ENCODE measurements at regions of chr3 and their contacts with region 1.

Region 1: GRCh38 chr3:27467545-27467944 is 16.6 kb downstream of the SLC4A7 start:
- DNase-seq: no peak
- H3K4me3 Mint-ChIP-seq: no peak overlapping the region
- H3K27ac Mint-ChIP-seq: no peak overlapping the region
- H3K4me1 Mint-ChIP-seq: no peaks in the 10 kb centered on the region
- H3K27me3 Mint-ChIP-seq: no peaks in the 10 kb centered on the region
- CTCF ChIP-seq: no peak

Region 2: DNA sequence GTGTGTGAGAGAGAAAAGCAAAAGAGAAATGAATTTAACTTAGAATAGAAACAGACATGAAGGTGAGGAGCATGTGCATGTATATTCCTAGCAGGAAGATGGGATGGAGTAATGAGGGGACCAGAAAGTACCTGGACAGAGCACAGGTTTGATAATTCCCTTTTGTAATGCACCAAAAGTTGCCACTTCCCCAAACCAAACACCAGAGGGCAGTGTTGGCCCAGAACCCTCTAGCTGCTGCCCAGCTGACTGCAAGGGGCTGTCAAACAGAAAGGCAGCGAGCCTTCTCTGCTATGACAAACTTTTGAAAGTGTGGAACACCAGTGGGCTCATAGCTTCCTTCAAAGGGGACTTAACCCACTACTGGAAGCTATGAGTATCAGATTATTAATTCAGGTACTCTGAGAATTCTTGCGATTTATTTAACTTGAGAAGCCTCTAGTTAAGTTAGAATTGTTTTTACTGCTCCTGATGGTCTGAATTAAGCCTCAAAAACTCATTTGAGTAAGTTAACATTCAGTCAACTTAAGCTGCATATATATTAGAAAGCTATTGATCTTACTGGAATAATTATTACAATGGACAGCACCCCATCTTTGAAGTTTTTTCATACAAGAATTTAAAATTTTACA is 333.3 kb before region 1 on chr3:
- CTCF ChIA-PET with region 1: no interaction called
- intact Hi-C with region 1: loop called (anchors 5 kb)
- DNase-seq: peak; percentile 70
- H3K4me3 Mint-ChIP-seq: no peak overlapping the region
- H3K27ac Mint-ChIP-seq: no peak overlapping the region
- H3K4me1 Mint-ChIP-seq: peaks cover 19% of the 10 kb centered on the region
- H3K27me3 Mint-ChIP-seq: no peaks in the 10 kb centered on the region
- CTCF ChIP-seq: peak; percentile 79

Region 3: GRCh38 chr3:27312044-27312668 is 155.4 kb before region 1 on chr3:
- CTCF ChIA-PET with region 1: no interaction called
- intact Hi-C with region 1: loop called (anchors 1 kb)
- DNase-seq: peak; percentile 26
- H3K4me3 Mint-ChIP-seq: no peak overlapping the region
- H3K27ac Mint-ChIP-seq: no peak overlapping the region
- H3K4me1 Mint-ChIP-seq: no peaks in the 10 kb centered on the region
- H3K27me3 Mint-ChIP-seq: no peaks in the 10 kb centered on the region
- CTCF ChIP-seq: peak; percentile 50

Region 4: GRCh38 chr3:27345492-27345891 is 122.1 kb before region 1 on chr3:
- CTCF ChIA-PET with region 1: no interaction called
- intact Hi-C with region 1: no loop called
- DNase-seq: peak; percentile 69
- H3K4me3 Mint-ChIP-seq: peak overlapping the region; percentile 51
- H3K27ac Mint-ChIP-seq: peak overlapping the region; percentile 61
- H3K4me1 Mint-ChIP-seq: peaks cover 28% of the 10 kb centered on the region
- H3K27me3 Mint-ChIP-seq: no peaks in the 10 kb centered on the region
- CTCF ChIP-seq: no peak

Region 5: GRCh38 chr3:27357665-27358258 is 109.8 kb before region 1 on chr3:
- CTCF ChIA-PET with region 1: no interaction called
- intact Hi-C with region 1: loop called (anchors 5 kb)
- DNase-seq: peak; percentile 69
- H3K4me3 Mint-ChIP-seq: no peak overlapping the region
- H3K27ac Mint-ChIP-seq: no peak overlapping the region
- H3K4me1 Mint-ChIP-seq: peaks cover 24% of the 10 kb centered on the region
- H3K27me3 Mint-ChIP-seq: no peaks in the 10 kb centered on the region
- CTCF ChIP-seq: no peak

Region 6: DNA sequence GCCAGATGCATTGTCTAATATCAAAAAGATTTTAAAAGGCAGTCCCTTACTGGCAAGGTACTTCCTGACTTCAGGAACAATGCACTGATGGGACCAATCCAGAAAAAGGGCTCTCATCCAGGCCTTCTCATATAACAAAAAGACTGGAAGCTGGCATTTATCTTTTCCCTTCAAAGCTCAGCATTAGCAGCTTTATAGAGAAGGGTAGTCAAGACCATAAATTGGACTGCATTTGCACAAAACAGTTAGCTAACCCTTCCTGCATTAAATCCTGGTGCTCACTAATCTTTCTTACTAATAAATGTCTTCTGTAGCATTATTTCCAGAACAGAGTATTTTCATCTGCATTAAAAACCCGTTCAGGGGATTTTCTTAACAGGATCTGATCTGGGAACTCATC is 52.3 kb before region 1 on chr3:
- CTCF ChIA-PET with region 1: no interaction called
- intact Hi-C with region 1: loop called (anchors 10 kb)
- DNase-seq: no peak
- H3K4me3 Mint-ChIP-seq: no peak overlapping the region
- H3K27ac Mint-ChIP-seq: no peak overlapping the region
- H3K4me1 Mint-ChIP-seq: no peaks in the 10 kb centered on the region
- H3K27me3 Mint-ChIP-seq: no peaks in the 10 kb centered on the region
- CTCF ChIP-seq: no peak

Region 7: DNA sequence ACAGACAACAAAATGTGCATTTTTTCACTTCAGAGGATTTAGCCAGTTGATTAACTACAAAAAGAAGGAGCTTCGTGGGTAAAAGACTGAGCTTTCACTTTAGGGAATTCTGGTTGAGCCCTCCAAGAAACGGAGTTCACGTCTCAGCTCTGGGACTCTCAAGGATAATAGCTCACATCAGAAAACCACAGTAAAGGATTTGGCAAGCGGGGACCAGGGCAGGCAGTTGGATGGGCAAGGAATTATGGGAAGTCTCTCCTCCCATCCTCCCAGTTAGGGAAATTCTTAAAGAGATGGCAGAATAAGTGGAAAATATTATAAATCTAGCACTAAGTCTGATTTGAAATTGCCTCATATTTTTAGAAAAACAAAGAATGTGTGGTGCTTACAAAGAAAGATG is 442.9 kb after region 1 on chr3:
- CTCF ChIA-PET with region 1: no interaction called
- intact Hi-C with region 1: no loop called
- DNase-seq: no peak
- H3K4me3 Mint-ChIP-seq: no peak overlapping the region
- H3K27ac Mint-ChIP-seq: no peak overlapping the region
- H3K4me1 Mint-ChIP-seq: no peaks in the 10 kb centered on the region
- H3K27me3 Mint-ChIP-seq: peaks cover 13% of the 10 kb centered on the region
- CTCF ChIP-seq: no peak

Measured in Calu3 (cell line).